ENCODE measurements at regions of chr15 and their contacts with region 1.

Region 1: DNA sequence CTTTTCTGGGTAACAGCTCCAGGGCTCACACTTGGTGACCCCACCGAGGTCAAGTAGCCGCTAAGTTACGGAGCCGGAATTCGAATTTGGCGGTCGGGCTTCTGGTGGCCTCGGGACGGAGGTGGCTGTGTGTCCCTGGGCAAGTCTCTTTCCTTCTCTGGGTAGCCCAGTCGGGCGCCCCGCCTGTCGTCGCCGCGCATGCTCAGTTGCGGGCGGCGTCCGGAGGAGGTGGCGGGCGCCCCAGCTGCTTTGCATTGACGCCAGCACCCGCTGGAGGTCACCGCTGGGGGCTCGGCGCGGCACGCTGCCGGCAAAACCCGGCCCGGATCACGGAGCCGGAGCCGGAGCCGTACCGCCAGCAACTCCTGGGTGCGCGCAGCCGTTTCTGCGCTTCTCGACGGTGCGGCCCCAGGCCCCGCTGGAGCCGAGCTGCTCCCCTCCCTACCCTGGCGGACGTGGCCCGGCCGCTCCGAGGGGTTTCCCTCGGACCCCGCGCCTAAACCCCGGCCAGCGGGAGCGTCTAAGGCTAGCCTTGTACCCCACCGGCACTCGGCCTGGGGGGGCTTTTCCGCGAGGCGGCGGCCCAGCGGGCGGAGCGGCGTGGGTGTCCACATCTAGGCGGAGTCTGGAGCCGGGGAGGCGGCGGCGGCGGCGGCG is 474 bp upstream of the PDE8A start:
- DNase-seq: peak; percentile 90 to 99 (median 95)
- ATAC-seq: peak; percentile 69
- H3K4me3 ChIP-seq: peak overlapping the region; percentile 98
- H3K4me3 Mint-ChIP-seq: peak overlapping the region; percentile 98
- H3K27ac ChIP-seq: peak overlapping the region; percentile 74 to 93
- H3K27ac Mint-ChIP-seq: peak overlapping the region; percentile 95
- H3K4me1 ChIP-seq: peaks cover 32% of the 10 kb centered on the region
- H3K4me1 Mint-ChIP-seq: peaks cover 52% of the 10 kb centered on the region
- H3K27me3 ChIP-seq: no peaks in the 10 kb centered on the region
- H3K27me3 Mint-ChIP-seq: no peaks in the 10 kb centered on the region
- CTCF ChIP-seq: peak; percentile 31

Region 2: GRCh38 chr15:84570164-84570735 is 410.9 kb before region 1 on chr15:
- CTCF ChIA-PET with region 1: no interaction called
- POLR2A ChIA-PET with region 1: interaction called, 10 read pairs
- intact Hi-C with region 1: no loop called
- DNase-seq: peak; percentile 11 to 72 (median 53)
- ATAC-seq: peak; percentile 56
- H3K4me3 ChIP-seq: peak overlapping the region; percentile 84
- H3K4me3 Mint-ChIP-seq: peak overlapping the region; percentile 92
- H3K27ac ChIP-seq: peak overlapping the region in 1 of 2 donors; percentile 52
- H3K27ac Mint-ChIP-seq: peak overlapping the region; percentile 70
- H3K4me1 ChIP-seq: peaks cover 18% of the 10 kb centered on the region
- H3K4me1 Mint-ChIP-seq: peaks cover 8% of the 10 kb centered on the region
- H3K27me3 ChIP-seq: no peaks in the 10 kb centered on the region
- H3K27me3 Mint-ChIP-seq: no peaks in the 10 kb centered on the region
- CTCF ChIP-seq: no peak

Region 3: GRCh38 chr15:84633311-84634227 is 347.6 kb before region 1 on chr15:
- CTCF ChIA-PET with region 1: no interaction called
- POLR2A ChIA-PET with region 1: interaction called, 12 read pairs
- intact Hi-C with region 1: loop called in 1 of 2 experiments (anchors 10 kb)
- DNase-seq: peak; percentile 43 to 85 (median 60)
- ATAC-seq: peak; percentile 41
- H3K4me3 ChIP-seq: peak overlapping the region; percentile 69
- H3K4me3 Mint-ChIP-seq: peak overlapping the region; percentile 96
- H3K27ac ChIP-seq: peak overlapping the region; percentile 29 to 61
- H3K27ac Mint-ChIP-seq: peak overlapping the region; percentile 92
- H3K4me1 ChIP-seq: peaks cover 41% of the 10 kb centered on the region
- H3K4me1 Mint-ChIP-seq: peaks cover 52% of the 10 kb centered on the region
- H3K27me3 ChIP-seq: no peaks in the 10 kb centered on the region
- H3K27me3 Mint-ChIP-seq: no peaks in the 10 kb centered on the region
- CTCF ChIP-seq: no peak

Region 4: DNA sequence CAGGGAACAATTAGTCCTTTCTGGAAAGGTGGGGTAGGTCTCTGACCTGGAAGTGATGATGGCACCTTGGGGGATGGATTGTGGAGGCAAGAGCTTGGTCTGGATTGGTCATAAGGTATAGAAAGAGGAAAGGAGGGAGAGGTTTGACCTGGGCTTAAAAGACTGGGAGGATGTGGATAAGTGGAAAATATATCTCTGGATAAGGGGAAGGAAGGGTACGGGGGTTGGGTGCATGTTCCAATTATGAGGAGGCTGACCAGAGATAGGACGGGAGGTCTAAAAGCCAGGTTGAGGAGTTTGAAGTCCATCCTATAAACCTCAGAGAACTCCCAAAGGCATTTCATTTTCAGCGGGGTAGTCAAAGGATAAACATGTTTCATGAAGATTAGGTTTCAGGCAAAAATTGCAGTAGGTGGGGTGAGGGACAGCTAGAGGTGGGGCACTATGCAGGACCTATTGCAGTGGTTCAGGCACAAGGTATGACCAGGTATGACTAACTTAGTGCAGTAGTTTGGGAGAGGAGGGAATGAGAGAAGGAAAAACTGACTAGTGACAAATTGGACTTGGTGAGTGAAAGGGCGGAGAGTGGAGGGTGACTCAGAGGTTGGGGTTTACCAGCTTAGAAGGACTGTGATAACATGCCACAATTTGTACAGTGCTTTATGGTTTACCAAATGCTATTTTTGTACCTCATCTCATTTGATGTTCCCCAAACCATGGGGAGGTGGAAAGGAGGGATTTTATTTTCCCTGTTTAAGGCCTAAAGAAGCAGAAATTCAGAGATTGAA is 11.2 kb after region 1 on chr15:
- CTCF ChIA-PET with region 1: no interaction called
- POLR2A ChIA-PET with region 1: interaction called, 18 read pairs
- intact Hi-C with region 1: no loop called
- DNase-seq: peak in 4 of 14 experiments; percentile 15 to 48 (median 31)
- ATAC-seq: no peak
- H3K4me3 ChIP-seq: no peak overlapping the region
- H3K4me3 Mint-ChIP-seq: no peak overlapping the region
- H3K27ac ChIP-seq: no peak overlapping the region
- H3K27ac Mint-ChIP-seq: no peak overlapping the region
- H3K4me1 ChIP-seq: peaks cover 29% of the 10 kb centered on the region
- H3K4me1 Mint-ChIP-seq: peaks cover 60% of the 10 kb centered on the region
- H3K27me3 ChIP-seq: no peaks in the 10 kb centered on the region
- H3K27me3 Mint-ChIP-seq: no peaks in the 10 kb centered on the region
- CTCF ChIP-seq: no peak

Region 5: DNA sequence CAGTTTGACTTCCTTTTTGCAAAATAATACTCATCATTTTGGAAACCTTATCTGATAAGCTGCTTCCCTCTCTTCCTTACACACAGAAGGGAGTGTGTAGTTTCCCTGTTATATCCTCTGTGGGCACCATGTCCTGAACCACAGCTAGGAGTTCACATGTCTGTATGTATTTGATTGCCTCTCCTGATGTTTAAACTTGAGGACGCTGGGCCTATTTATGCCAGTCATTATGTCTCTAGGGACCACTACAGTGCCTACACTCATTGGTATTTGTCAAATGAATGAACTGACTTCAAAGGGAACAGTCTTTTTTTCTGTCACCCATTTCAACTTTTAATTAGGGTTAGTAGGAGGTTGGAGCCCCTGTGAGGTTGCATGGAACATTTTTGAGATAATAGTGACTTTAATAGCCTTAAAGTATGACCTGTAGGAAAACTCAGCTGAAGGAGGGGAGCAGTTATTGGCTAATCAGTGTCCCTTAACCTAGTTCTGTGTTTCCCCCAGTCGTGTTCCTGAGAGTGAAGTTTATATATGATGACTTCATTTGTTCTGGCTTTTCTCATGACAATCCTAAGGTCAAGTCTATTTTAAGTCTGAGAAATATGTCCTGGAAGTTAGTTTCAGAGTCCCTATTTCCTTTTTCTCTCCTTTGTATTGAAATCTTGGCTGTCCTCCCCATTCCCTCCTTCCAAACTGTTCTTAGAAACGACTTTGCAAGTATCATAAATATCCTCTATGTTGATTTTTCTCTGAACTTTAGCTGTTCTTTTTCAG is 29.4 kb after region 1 on chr15:
- CTCF ChIA-PET with region 1: interaction called, 11 read pairs
- POLR2A ChIA-PET with region 1: interaction called, 6 read pairs
- intact Hi-C with region 1: loop called in 1 of 2 experiments (anchors 2 kb)
- DNase-seq: no peak
- ATAC-seq: no peak
- H3K4me3 ChIP-seq: no peak overlapping the region
- H3K4me3 Mint-ChIP-seq: no peak overlapping the region
- H3K27ac ChIP-seq: no peak overlapping the region
- H3K27ac Mint-ChIP-seq: no peak overlapping the region
- H3K4me1 ChIP-seq: peaks cover 8% of the 10 kb centered on the region
- H3K4me1 Mint-ChIP-seq: peaks cover 63% of the 10 kb centered on the region
- H3K27me3 ChIP-seq: no peaks in the 10 kb centered on the region
- H3K27me3 Mint-ChIP-seq: no peaks in the 10 kb centered on the region
- CTCF ChIP-seq: no peak

Region 6: GRCh38 chr15:85044251-85044853 is 63.2 kb after region 1 on chr15:
- CTCF ChIA-PET with region 1: interaction called, 3 read pairs
- POLR2A ChIA-PET with region 1: interaction called, 36 read pairs
- intact Hi-C with region 1: loop called in 1 of 2 experiments (anchors 5 kb)
- DNase-seq: peak; percentile 18 to 76 (median 40)
- ATAC-seq: peak; percentile 65
- H3K4me3 ChIP-seq: no peak overlapping the region
- H3K4me3 Mint-ChIP-seq: no peak overlapping the region
- H3K27ac ChIP-seq: no peak overlapping the region
- H3K27ac Mint-ChIP-seq: no peak overlapping the region
- H3K4me1 ChIP-seq: no peaks in the 10 kb centered on the region
- H3K4me1 Mint-ChIP-seq: peaks cover 42% of the 10 kb centered on the region
- H3K27me3 ChIP-seq: no peaks in the 10 kb centered on the region
- H3K27me3 Mint-ChIP-seq: no peaks in the 10 kb centered on the region
- CTCF ChIP-seq: peak; percentile 62

Region 7: DNA sequence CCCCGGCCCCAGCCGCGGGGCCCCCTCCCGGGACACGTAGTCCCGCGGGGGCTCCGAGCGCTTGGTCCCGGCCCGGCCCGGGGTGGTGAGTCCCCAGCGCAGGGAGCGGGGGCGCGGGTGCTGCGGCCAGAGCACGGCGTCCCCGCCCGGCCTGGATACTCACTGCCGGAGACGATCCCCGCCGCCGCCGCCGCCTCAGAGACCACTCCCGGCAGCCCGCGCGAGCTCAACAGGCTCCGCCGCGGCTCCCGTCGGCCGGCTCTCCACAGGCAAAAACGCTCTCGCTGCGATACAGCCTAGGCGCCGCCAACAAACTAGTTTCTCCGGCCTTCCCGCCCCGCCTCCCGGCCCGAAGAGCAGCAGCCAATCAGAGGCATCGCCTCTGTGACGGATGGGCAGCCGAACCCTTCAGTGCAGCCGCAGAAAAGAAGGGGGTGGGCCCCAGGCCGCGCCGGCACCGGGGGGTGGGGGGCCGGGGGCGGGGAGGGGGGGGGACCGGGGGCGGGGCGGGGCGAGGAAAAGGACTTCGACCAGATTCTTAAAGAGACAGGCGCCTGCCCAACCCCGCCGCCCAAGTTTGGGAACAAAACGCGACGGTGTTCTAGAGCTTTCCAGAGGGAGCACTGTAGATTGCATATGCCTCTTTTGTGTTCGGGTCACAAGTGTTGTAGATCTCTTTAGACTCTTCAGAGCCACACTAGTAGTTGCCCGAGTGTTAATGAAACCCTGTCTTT is 813.6 kb after region 1 on chr15 and contains the start of gene KLHL25:
- CTCF ChIA-PET with region 1: no interaction called
- POLR2A ChIA-PET with region 1: no interaction called
- intact Hi-C with region 1: loop called in 1 of 2 experiments (anchors 2 kb)
- DNase-seq: peak; percentile 84 to 97 (median 92)
- ATAC-seq: peak; percentile 95
- H3K4me3 ChIP-seq: peak within 1 kb of the TSS; percentile 80
- H3K4me3 Mint-ChIP-seq: peak within 1 kb of the TSS; percentile 99
- H3K27ac ChIP-seq: peak within 1 kb of the TSS in 1 of 2 donors; percentile 56
- H3K27ac Mint-ChIP-seq: peak within 1 kb of the TSS; percentile 56
- H3K4me1 ChIP-seq: peaks cover 38% of the 10 kb centered on the region
- H3K4me1 Mint-ChIP-seq: peaks cover 47% of the 10 kb centered on the region
- H3K27me3 ChIP-seq: no peaks in the 10 kb centered on the region
- H3K27me3 Mint-ChIP-seq: no peaks in the 10 kb centered on the region
- CTCF ChIP-seq: no peak
- total RNA-seq, gene KLHL25: 9.0 to 10.2 TPM